ENCODE measurements at regions of chr13 and their contacts with region 1.

Region 1: GRCh38 chr13:48532506-48533499 is at the start of gene RCBTB2:
- DNase-seq: peak; percentile 98 to 100 (median 98)
- H3K4me3 ChIP-seq: peak within 1 kb of the TSS; percentile 86
- H3K4me3 Mint-ChIP-seq: peak within 1 kb of the TSS; percentile 92 to 97 (median 96)
- H3K27ac ChIP-seq: peak within 1 kb of the TSS; percentile 88
- H3K27ac Mint-ChIP-seq: peak within 1 kb of the TSS; percentile 96 to 99 (median 98)
- H3K4me1 ChIP-seq: peaks cover 30% of the 10 kb centered on the region
- H3K4me1 Mint-ChIP-seq: peaks cover 26 to 49% (median 48%) of the 10 kb centered on the region in 3 donors
- H3K27me3 ChIP-seq: no peaks in the 10 kb centered on the region
- H3K27me3 Mint-ChIP-seq: peaks cover 0 to 12% of the 10 kb centered on the region in 2 donors
- total RNA-seq, gene RCBTB2: 5.4 to 6.5 TPM

Region 2: DNA sequence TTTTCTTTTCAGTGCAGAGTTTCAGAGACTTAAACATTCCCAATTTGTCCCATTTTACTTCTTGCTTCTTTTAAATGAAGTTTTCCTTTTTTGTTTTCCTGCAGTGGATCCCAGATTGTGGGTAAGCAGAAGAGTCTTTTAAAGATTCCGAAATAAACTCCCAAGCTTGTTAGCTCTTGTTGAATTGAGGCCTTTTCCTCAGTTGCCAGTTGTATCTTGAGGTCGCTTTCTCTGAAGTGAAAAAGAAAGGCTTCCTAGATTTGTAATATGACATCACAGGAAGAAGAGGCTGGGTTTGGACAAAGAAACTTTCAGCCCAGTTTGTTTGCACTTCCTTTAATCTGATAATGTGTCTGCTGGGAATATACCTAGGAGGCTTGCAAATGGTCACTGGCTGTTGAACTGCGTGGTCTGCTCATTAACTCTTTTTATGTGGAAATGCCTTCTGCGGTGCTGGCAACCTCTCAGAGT is 119.9 kb before region 1 on chr13 and contains the start of gene LPAR6:
- CTCF ChIA-PET with region 1: no interaction called
- POLR2A ChIA-PET with region 1: interaction called, 10 read pairs
- DNase-seq: peak in 2 of 5 donors; percentile 21 to 23
- H3K4me3 ChIP-seq: peak within 1 kb of the TSS; percentile 78
- H3K4me3 Mint-ChIP-seq: peak within 1 kb of the TSS; percentile 88 to 97 (median 96)
- H3K27ac ChIP-seq: peak within 1 kb of the TSS; percentile 33
- H3K27ac Mint-ChIP-seq: peak within 1 kb of the TSS; percentile 85 to 98 (median 95)
- H3K4me1 ChIP-seq: peaks cover 32% of the 10 kb centered on the region
- H3K4me1 Mint-ChIP-seq: peaks cover 42 to 58% (median 55%) of the 10 kb centered on the region in 3 donors
- H3K27me3 ChIP-seq: no peaks in the 10 kb centered on the region
- H3K27me3 Mint-ChIP-seq: no peaks in the 10 kb centered on the region
- total RNA-seq, gene LPAR6: 7.9 to 8.8 TPM

Region 3: GRCh38 chr13:48492470-48493065 is 40.2 kb before region 1 on chr13:
- CTCF ChIA-PET with region 1: interaction called, 5 read pairs
- POLR2A ChIA-PET with region 1: interaction called, 12 read pairs
- DNase-seq: peak; percentile 59 to 85 (median 75)
- H3K4me3 ChIP-seq: peak overlapping the region; percentile 84
- H3K4me3 Mint-ChIP-seq: no peak overlapping the region
- H3K27ac ChIP-seq: peak overlapping the region; percentile 72
- H3K27ac Mint-ChIP-seq: no peak overlapping the region
- H3K4me1 ChIP-seq: peaks cover 77% of the 10 kb centered on the region
- H3K4me1 Mint-ChIP-seq: peaks cover 3 to 30% (median 3%) of the 10 kb centered on the region in 3 donors
- H3K27me3 ChIP-seq: no peaks in the 10 kb centered on the region
- H3K27me3 Mint-ChIP-seq: no peaks in the 10 kb centered on the region

Region 4: GRCh38 chr13:48505597-48506091 is 27.2 kb before region 1 on chr13:
- CTCF ChIA-PET with region 1: interaction called, 6 read pairs
- POLR2A ChIA-PET with region 1: interaction called, 27 read pairs
- DNase-seq: peak; percentile 18 to 78 (median 73)
- H3K4me3 ChIP-seq: peak overlapping the region; percentile 46
- H3K4me3 Mint-ChIP-seq: peak overlapping the region; percentile 20 to 78 (median 74)
- H3K27ac ChIP-seq: peak overlapping the region; percentile 36
- H3K27ac Mint-ChIP-seq: peak overlapping the region; percentile 79 to 96 (median 94)
- H3K4me1 ChIP-seq: peaks cover 39% of the 10 kb centered on the region
- H3K4me1 Mint-ChIP-seq: peaks cover 47 to 73% (median 71%) of the 10 kb centered on the region in 3 donors
- H3K27me3 ChIP-seq: no peaks in the 10 kb centered on the region
- H3K27me3 Mint-ChIP-seq: peaks cover 0 to 2% of the 10 kb centered on the region in 2 donors

Region 5: DNA sequence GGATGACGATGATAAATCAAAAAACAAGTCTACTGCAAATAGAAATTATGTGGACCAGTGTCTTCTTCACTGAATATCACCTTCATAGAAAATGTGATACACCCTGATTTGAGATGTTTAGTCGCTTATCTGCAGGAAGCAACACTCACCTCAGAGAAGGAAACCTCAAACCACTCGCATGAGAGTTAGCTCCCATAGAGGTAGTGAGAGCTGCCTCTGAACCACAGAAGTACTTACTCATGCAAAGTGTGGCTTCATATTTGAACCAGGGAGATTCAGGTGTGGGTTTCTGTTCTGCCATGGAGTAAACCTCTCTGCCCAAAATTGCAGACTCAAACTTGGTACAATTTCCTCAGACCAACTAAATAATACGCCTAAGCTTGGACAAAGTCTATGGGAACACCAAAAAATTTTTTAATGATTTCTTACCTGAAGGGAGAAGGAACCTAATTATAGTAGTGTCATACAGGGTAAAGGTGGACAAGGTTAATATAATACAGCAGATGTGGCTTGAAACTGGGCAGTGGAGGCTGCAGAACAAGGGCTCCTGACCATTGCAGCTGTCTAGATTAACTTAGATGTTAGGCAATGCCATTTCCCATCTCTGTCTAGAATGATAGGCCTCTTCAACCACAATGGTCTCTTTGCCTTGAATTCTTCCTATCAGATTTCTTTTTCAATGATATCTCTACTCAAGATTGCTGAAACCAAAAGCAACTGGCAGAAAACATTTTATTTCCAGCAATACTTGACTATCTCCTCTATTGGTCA is 29.7 kb after region 1 on chr13:
- CTCF ChIA-PET with region 1: interaction called, 8 read pairs
- POLR2A ChIA-PET with region 1: interaction called, 28 read pairs
- DNase-seq: peak; percentile 38 to 85 (median 80)
- H3K4me3 ChIP-seq: peak overlapping the region; percentile 30
- H3K4me3 Mint-ChIP-seq: peak overlapping the region; percentile 8 to 79 (median 56)
- H3K27ac ChIP-seq: no peak overlapping the region
- H3K27ac Mint-ChIP-seq: peak overlapping the region in 6 of 8 donors; percentile 4 to 85 (median 42)
- H3K4me1 ChIP-seq: peaks cover 32% of the 10 kb centered on the region
- H3K4me1 Mint-ChIP-seq: peaks cover 46 to 79% (median 61%) of the 10 kb centered on the region in 3 donors
- H3K27me3 ChIP-seq: no peaks in the 10 kb centered on the region
- H3K27me3 Mint-ChIP-seq: peaks cover 0 to 3% of the 10 kb centered on the region in 2 donors

Region 6: DNA sequence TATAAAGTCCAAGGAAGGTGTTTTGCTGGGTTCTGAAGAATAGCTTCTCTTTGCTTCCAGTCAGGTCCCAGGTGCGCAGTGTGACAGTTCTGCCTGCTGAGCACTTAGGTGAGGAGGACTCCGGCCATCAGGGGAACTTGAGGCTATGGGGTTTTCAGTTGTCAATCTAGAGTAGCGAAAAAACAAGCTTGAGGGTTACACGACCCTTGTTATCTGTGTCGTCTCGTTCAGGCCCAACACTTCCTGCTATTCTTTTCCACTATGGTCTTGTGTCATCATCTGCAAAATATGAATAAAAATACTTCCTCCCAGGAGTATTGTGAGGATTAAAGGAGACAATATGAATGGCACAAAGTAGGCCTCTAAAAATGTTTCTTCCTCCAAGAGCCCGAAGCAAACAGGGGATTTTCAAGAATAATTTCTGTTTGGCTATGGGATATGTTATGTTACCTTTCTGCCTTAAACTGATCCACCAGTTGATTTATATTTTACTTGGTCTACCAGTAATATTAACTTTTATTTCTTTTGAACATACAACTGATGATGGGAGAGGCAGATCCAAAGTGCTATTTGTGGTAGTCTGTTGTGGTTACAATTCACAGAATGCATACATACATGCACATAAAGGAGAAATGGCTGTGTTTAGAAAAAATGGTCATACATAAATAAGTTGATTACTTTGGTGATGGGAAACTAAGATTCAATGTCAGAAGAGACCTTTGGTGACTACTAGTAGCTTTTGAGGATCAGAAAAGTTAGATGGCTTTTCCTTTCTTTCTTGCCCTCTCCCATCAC is 40.6 kb after region 1 on chr13:
- CTCF ChIA-PET with region 1: no interaction called
- POLR2A ChIA-PET with region 1: no interaction called
- DNase-seq: no peak
- H3K4me3 ChIP-seq: no peak overlapping the region
- H3K4me3 Mint-ChIP-seq: peak overlapping the region in 1 of 7 donors; percentile 18
- H3K27ac ChIP-seq: no peak overlapping the region
- H3K27ac Mint-ChIP-seq: peak overlapping the region in 1 of 8 donors; percentile 81
- H3K4me1 ChIP-seq: peaks cover 9% of the 10 kb centered on the region
- H3K4me1 Mint-ChIP-seq: peaks cover 19 to 51% (median 49%) of the 10 kb centered on the region in 3 donors
- H3K27me3 ChIP-seq: no peaks in the 10 kb centered on the region
- H3K27me3 Mint-ChIP-seq: peaks cover 0 to 5% of the 10 kb centered on the region in 2 donors

Region 7: GRCh38 chr13:48602296-48603016 is 69.7 kb after region 1 on chr13:
- CTCF ChIA-PET with region 1: no interaction called
- POLR2A ChIA-PET with region 1: no interaction called
- DNase-seq: no peak
- H3K4me3 ChIP-seq: no peak overlapping the region
- H3K4me3 Mint-ChIP-seq: no peak overlapping the region
- H3K27ac ChIP-seq: no peak overlapping the region
- H3K27ac Mint-ChIP-seq: no peak overlapping the region
- H3K4me1 ChIP-seq: no peaks in the 10 kb centered on the region
- H3K4me1 Mint-ChIP-seq: peaks cover 0 to 6% (median 4%) of the 10 kb centered on the region in 3 donors
- H3K27me3 ChIP-seq: no peaks in the 10 kb centered on the region
- H3K27me3 Mint-ChIP-seq: peaks cover 0 to 10% of the 10 kb centered on the region in 2 donors

Region 8: DNA sequence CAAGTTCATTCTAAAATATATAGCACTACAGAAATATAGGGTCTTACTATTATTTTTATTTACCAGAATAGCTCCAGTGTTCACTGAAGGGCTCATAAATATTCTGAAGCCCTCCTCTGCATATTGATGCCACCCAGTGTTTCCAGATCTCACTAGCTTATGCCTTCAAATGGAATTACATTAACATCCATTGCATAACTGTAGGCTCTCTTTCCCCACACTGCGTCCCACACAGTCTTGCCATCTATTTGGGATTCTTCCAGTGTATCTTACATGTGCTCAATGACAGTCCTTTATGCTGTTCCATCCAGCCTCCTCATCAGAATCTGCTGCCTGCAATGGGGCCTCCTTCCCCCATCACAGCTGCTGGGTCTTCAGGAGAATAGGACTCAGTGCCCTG is 258.2 kb after region 1 on chr13:
- CTCF ChIA-PET with region 1: no interaction called
- POLR2A ChIA-PET with region 1: no interaction called
- DNase-seq: no peak
- H3K4me3 ChIP-seq: no peak overlapping the region
- H3K4me3 Mint-ChIP-seq: no peak overlapping the region
- H3K27ac ChIP-seq: no peak overlapping the region
- H3K27ac Mint-ChIP-seq: no peak overlapping the region
- H3K4me1 ChIP-seq: no peaks in the 10 kb centered on the region
- H3K4me1 Mint-ChIP-seq: no peaks in the 10 kb centered on the region
- H3K27me3 ChIP-seq: no peaks in the 10 kb centered on the region
- H3K27me3 Mint-ChIP-seq: peaks cover 1 to 5% of the 10 kb centered on the region in 2 donors

Measured in CD8-positive, alpha-beta memory T cell (primary cell).